ENCODE measurements at regions of chr5 and their contacts with region 1.

Region 1: DNA sequence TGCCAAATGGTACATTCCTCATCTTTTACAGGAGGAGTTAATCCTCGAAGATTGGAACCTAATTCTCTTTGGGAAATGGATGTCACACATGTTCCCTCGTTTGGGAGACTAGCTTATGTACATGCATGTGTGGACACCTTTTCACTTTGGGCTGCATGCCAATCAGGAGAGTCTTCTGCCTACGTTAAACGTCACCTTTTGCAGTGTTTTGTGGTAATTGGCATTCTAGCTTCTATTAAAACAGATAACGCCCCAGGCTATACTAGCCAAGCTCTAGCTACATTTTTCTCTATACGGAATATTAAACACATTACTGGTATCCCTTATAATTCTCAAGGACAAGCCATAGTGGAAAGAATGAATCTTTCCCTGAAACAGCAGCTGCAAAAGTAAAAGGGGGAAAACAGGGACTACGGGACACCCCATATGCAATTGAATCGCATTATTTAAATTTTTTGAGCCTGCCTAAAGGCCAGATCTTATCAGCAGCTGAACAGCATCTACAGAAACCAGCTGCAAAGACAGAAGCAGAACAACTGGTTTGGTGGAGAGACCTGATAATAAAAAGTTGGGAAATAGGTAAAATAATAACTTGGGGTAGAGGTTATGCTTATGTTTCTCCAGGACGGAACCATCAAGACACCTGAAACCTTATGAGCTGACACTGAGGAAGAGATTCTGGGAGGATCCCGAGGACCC is 23.7 kb upstream of the PDCD6 start:
- DNase-seq: no peak
- H3K4me3 ChIP-seq: no peak overlapping the region
- H3K27ac ChIP-seq: no peak overlapping the region
- H3K4me1 ChIP-seq: peaks cover 3% of the 10 kb centered on the region
- H3K27me3 ChIP-seq: no peaks in the 10 kb centered on the region
- CTCF ChIP-seq: no peak
- POLR2A ChIP-seq: no peak

Region 2: DNA sequence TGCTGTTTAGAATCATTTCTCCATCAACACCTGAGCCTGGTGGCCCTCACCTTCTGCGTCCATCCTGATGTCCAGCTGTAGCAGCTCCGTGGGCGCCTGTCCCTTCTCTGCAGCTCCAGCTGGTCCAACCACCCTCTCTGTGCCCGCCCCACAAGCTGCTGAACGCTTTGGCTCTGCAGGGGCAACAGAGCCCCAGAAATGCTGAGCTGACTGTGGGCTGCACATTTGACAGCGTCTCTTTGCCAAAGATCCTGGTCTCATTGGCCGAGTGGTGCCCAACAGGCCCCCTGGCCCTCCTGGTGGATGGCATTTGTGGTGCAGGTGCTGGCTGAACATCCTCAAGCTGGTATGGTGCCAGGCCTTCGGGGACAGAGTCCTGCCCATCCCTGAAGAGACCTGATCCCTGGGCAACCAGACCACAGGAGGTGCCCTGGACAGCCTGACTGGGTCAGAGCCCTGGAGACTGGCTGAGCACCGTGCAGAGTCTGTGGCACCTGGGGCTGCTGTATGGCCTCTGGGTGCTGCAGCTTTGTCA is 339.1 kb after region 1 on chr5:
- intact Hi-C with region 1: no loop called
- DNase-seq: no peak
- H3K4me3 ChIP-seq: no peak overlapping the region
- H3K27ac ChIP-seq: no peak overlapping the region
- H3K4me1 ChIP-seq: no peaks in the 10 kb centered on the region
- H3K27me3 ChIP-seq: no peaks in the 10 kb centered on the region
- CTCF ChIP-seq: no peak
- POLR2A ChIP-seq: no peak

Region 3: GRCh38 chr5:2075365-2075764 is 1827.7 kb after region 1 on chr5:
- intact Hi-C with region 1: loop called (anchors 5 kb)
- DNase-seq: no peak
- H3K4me3 ChIP-seq: no peak overlapping the region
- H3K27ac ChIP-seq: no peak overlapping the region
- H3K4me1 ChIP-seq: no peaks in the 10 kb centered on the region
- H3K27me3 ChIP-seq: no peaks in the 10 kb centered on the region
- CTCF ChIP-seq: no peak
- POLR2A ChIP-seq: no peak

Measured in vagina (tissue), 2 donors.